Activated CD4-positive, alpha-beta T cell treated with anti-CD3 and anti-CD28 coated beads for 36 hours (primary cell): ENCODE measurements at regions of chr9 and their contacts with region 1.

Region 1: DNA sequence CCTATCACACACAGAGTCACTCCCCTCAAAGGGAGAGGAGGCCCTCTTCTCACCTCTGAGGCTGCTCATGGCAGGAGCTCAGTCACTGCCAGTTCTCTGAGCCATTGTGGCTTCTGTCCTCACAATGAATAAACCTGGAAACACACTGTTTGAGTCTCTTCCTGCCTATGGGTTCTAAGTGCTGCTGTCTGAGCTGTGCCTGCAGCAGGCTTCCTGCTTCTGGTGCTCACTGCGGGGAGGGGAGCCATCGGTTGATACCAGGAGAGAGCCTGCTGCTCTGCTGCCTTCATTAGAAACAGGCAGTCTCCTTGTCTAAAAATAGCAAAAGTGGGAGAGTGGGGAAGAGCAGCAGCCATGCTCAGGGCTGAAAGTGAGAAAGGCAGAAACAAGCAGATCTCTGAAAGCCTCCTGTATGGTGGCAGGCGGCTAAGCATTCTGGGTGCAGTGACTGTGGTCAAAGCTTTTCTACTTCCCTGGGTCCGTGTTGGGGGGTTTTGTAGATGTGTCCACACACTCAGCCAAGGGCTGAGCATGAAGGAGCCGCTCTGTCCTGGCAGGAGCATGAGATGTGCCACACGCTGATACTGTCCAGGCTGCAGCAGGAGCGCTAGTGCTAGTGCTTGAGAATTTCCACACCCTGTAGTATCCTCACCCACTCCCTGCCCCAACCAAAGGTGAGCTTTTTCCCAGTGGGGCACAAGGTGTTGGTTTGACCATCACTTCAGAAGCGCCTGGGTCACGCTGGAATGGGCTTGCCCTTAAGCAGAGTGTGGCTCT is 34.2 kb downstream of the PRKACG start:
- DNase-seq: peak; percentile 64
- ATAC-seq: peak; percentile 84
- H3K4me3 Mint-ChIP-seq: peak overlapping the region; percentile 35
- H3K27ac Mint-ChIP-seq: peak overlapping the region; percentile 95
- H3K4me1 Mint-ChIP-seq: peaks cover 60% of the 10 kb centered on the region
- H3K27me3 Mint-ChIP-seq: peaks cover 3% of the 10 kb centered on the region

Region 2: GRCh38 chr9:69168709-69169217 is 189.0 kb after region 1 on chr9:
- CTCF ChIA-PET with region 1: no interaction called
- POLR2A ChIA-PET with region 1: no interaction called
- intact Hi-C with region 1: loop called in 1 of 2 experiments (anchors 5 kb)
- DNase-seq: peak; percentile 87
- ATAC-seq: peak; percentile 94
- H3K4me3 Mint-ChIP-seq: peak overlapping the region; percentile 70
- H3K27ac Mint-ChIP-seq: peak overlapping the region; percentile 73
- H3K4me1 Mint-ChIP-seq: peaks cover 25% of the 10 kb centered on the region
- H3K27me3 Mint-ChIP-seq: peaks cover 21% of the 10 kb centered on the region